ENCODE measurements at regions of chr4 and their contacts with region 1.

Region 1: GRCh38 chr4:183335369-183335940 is 13.2 kb upstream of the CLDN24 start:
- DNase-seq: peak; percentile 91
- H3K4me3 ChIP-seq: no peak overlapping the region
- H3K27ac ChIP-seq: peak overlapping the region; percentile 96
- H3K4me1 ChIP-seq: peaks cover 27% of the 10 kb centered on the region
- H3K27me3 ChIP-seq: no peaks in the 10 kb centered on the region
- CTCF ChIP-seq: no peak
- POLR2A ChIP-seq: peak; percentile 63

Region 2: DNA sequence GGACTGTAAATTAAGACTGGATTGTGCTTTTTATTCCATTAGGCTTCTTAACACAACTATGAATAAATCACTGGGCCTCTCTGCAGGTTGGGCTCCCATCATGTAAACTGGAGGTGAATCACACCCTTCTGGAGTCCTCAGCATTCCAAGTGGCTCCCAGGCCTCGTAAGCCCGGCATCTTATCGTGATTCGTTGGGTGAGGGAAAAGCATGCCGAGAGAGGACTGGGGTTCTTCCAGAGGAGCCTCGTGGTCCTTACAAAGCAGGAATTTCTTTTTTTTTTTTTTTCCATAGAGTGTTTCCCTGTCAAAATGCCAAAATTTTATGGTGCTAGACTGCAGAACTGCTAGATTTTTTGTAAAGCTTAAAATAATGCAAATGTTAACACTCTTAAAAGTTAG is 35.4 kb before region 1 on chr4:
- CTCF ChIA-PET with region 1: no interaction called
- POLR2A ChIA-PET with region 1: no interaction called
- dilution Hi-C with region 1: no loop called
- intact Hi-C with region 1: loop called (anchors 1 kb)
- DNase-seq: peak; percentile 36
- H3K4me3 ChIP-seq: no peak overlapping the region
- H3K27ac ChIP-seq: peak overlapping the region; percentile 42
- H3K4me1 ChIP-seq: peaks cover 19% of the 10 kb centered on the region
- H3K27me3 ChIP-seq: no peaks in the 10 kb centered on the region
- CTCF ChIP-seq: no peak
- POLR2A ChIP-seq: no peak

Region 3: GRCh38 chr4:183348706-183349659 is 13.5 kb after region 1 on chr4:
- CTCF ChIA-PET with region 1: no interaction called
- POLR2A ChIA-PET with region 1: no interaction called
- dilution Hi-C with region 1: no loop called
- intact Hi-C with region 1: loop called (anchors 1 kb)
- DNase-seq: peak; percentile 76
- H3K4me3 ChIP-seq: no peak overlapping the region
- H3K27ac ChIP-seq: peak overlapping the region; percentile 44
- H3K4me1 ChIP-seq: peaks cover 10% of the 10 kb centered on the region
- H3K27me3 ChIP-seq: no peaks in the 10 kb centered on the region
- CTCF ChIP-seq: no peak
- POLR2A ChIP-seq: no peak

Region 4: GRCh38 chr4:183355405-183355804 is 19.9 kb after region 1 on chr4:
- CTCF ChIA-PET with region 1: interaction called, 3 read pairs
- POLR2A ChIA-PET with region 1: no interaction called
- dilution Hi-C with region 1: no loop called
- intact Hi-C with region 1: loop called (anchors 1 kb)
- DNase-seq: peak; percentile 94
- H3K4me3 ChIP-seq: no peak overlapping the region
- H3K27ac ChIP-seq: no peak overlapping the region
- H3K4me1 ChIP-seq: peaks cover 19% of the 10 kb centered on the region
- H3K27me3 ChIP-seq: peaks cover 0 to 2% of the 10 kb centered on the region in 2 experiments
- CTCF ChIP-seq: no peak
- POLR2A ChIP-seq: peak; percentile 6

Region 5: DNA sequence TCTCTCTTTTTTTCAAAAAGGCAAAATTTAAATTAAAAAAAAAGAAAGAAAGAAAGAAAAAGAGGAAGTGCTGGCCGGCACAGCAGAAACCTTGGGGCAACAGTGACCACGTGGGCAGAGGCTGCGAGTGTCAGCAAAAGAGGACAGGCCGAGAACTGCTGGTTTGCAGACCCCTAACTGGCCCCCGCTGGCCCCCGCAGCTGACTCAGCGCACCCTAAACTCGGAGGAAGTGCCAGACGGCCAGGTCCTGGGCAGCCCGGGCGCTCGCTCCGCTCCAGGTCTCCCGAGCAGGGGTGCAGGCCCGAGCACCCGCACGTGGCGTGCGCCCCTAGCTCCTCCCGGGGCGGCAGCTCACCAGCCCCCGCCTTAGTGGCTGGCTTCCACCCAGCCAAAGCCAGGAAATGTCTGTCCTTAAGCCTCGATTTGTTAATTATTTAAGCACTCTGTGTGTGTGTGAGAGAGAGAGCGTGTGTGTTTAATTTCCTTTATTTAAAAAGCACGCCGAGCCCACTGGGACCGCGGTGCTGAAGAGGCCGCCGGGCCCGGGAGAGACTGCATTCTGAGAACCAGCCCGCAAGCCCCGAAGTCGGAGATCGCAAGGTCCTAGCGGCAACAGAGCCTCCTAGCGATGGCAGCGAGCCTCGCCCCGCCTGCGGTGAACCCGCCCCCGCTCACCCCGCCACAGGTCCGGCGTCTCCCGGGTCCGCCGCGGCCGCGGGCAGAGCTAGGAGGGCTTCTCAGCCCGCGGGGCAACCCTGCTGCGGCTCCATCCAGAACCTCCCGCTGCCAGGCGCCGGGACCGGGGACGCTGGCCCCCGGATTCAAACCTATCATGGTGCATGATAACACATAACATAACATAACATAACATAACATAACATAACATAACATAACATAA is 63.0 kb after region 1 on chr4:
- CTCF ChIA-PET with region 1: interaction called, 3 read pairs
- POLR2A ChIA-PET with region 1: no interaction called
- dilution Hi-C with region 1: no loop called
- intact Hi-C with region 1: loop called (anchors 5 kb)
- DNase-seq: peak; percentile 79
- H3K4me3 ChIP-seq: peak overlapping the region; percentile 8 to 43 (median 36)
- H3K27ac ChIP-seq: no peak overlapping the region
- H3K4me1 ChIP-seq: peaks cover 6% of the 10 kb centered on the region
- H3K27me3 ChIP-seq: no peaks in the 10 kb centered on the region
- CTCF ChIP-seq: peak; percentile 52 to 84
- POLR2A ChIP-seq: peak; percentile 33

Region 6: DNA sequence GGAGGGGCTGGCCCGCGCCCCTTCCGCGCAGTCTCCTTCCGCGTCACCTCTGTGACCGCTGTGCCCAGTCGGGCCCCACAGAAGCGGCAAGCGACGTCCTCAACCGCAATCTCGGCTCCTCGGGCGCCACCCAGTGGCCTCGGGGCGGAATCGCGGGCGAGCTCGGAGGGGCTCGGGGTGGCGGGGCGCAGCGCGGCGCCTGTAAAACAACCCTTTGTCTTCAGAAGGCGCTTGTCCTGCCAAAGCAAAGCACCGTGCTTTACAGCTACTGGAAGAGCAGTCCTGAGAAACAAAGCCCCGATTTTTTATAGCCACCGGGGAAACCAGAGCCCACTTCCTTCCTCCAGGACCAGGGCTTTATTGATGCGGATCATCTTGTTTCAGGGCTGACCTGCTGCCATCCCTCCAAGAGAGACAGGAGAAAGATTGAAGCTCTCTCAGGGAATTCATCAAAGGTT is 71.7 kb after region 1 on chr4:
- CTCF ChIA-PET with region 1: no interaction called
- POLR2A ChIA-PET with region 1: no interaction called
- dilution Hi-C with region 1: no loop called
- intact Hi-C with region 1: loop called (anchors 1 kb)
- DNase-seq: peak; percentile 90
- H3K4me3 ChIP-seq: peak overlapping the region; percentile 28 to 70 (median 33)
- H3K27ac ChIP-seq: peak overlapping the region; percentile 39
- H3K4me1 ChIP-seq: peaks cover 7% of the 10 kb centered on the region
- H3K27me3 ChIP-seq: no peaks in the 10 kb centered on the region
- CTCF ChIP-seq: peak; percentile 91 to 96
- POLR2A ChIP-seq: no peak

Region 7: DNA sequence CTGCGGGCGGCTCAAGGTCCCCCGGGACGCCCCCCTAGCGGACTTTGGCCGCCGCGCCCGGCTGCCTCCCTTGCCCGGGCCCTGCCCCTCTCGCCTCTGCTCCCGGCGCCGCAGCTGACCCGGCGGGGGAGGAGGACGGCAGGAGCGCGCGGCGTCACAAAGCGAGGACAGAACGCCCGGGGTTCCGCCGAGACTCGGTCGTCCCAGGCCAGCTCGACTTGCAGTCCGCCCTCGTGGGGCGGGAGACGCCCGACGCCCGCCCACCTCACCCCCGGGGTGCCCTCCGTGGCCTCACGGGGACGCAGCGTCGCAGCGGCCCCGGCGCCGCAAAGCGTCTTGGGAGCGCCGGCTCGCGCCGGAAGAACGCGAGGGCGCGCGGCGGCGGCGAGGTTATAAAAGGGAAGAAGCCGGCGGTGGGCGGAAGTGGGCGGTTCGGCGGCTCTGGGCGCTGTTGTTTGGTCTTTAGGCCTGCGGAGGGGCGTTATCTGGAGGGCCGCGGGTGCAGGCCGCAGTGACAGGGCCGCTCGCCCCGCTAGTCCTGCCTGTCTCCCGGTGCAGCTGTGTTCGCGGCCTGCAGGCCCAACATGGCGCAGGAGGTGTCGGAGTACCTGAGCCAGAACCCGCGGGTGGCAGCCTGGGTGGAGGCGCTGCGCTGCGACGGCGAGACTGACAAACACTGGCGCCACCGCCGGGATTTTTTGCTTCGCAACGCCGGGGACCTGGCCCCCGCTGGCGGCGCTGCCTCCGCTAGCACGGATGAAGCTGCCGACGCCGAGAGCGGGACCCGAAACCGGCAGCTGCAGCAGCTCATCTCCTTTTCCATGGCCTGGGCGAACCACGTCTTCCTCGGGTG is 109.0 kb after region 1 on chr4 and contains the start of gene CDKN2AIP:
- CTCF ChIA-PET with region 1: no interaction called
- POLR2A ChIA-PET with region 1: no interaction called
- dilution Hi-C with region 1: no loop called
- intact Hi-C with region 1: loop called (anchors 2 kb)
- DNase-seq: peak; percentile 93
- H3K4me3 ChIP-seq: peak within 1 kb of the TSS; percentile 34 to 68 (median 66)
- H3K27ac ChIP-seq: peak within 1 kb of the TSS; percentile 89
- H3K4me1 ChIP-seq: peaks cover 21% of the 10 kb centered on the region
- H3K27me3 ChIP-seq: no peaks in the 10 kb centered on the region
- CTCF ChIP-seq: no peak
- POLR2A ChIP-seq: peak; percentile 85
- total RNA-seq, gene CDKN2AIP: 10.4 and 12.8 TPM in 2 replicates

Measured in endothelial cell of umbilical vein (primary cell).